ENCODE measurements at regions of chr2 and their contacts with region 1.

Region 1: DNA sequence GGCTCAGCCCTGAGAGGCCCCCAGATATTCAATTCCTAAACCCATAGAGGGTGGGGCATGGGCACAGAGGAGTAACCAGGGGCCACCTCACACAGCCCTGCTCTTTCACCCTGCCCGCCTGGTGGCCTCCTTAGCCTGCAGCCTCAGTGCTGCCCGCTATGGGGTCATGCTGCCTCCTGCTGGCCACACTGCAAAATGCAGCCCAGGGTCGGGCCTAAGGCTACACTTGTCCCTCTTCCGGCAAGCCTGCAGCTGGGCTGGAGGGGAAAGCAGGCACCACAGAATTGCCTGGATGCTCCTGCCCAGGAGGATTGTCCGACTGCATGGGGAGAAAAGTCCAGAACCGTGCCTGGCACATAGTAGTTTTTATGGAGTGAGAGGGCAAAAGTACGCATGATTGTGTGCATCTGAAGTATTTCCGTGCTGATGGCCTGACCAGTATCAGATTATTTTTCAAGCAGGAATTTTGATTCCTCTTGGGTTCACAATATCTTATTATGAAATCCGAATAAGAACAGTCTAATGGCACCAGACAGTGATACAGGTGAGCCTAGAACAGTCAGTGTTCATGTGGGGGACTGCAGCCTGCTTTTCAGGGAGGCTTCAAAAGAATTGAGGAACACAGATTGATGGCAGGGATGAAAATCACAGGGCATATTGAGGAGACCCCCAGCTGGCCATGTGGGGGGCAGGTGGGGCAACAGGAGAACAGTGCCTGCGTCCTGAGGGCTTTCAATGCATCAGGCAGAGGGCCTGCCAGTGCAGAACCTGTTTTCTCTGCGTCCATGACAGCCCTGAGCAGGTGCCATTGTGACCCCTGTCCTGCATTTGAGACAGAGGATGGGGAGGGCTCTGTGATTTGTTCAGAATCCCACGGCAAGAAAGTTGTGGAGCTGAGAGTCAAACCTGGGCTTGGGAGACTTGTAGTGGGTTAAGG is 51.2 kb upstream of the ALPP start:
- DNase-seq: peak; percentile 57 to 68 (median 66)
- ATAC-seq: peak; percentile 93
- H3K4me3 ChIP-seq: no peak overlapping the region
- H3K27ac ChIP-seq: no peak overlapping the region
- H3K4me1 ChIP-seq: peaks cover 0 to 12% of the 10 kb centered on the region in 2 experiments; a peak in 2 of 5 replicates
- H3K27me3 ChIP-seq: no peaks in the 10 kb centered on the region
- CTCF ChIP-seq: peak; percentile 72 to 90 (median 73)
- EP300 ChIP-seq: no peak
- POLR2A ChIP-seq: no peak
- RAD21 ChIP-seq: peak; percentile 42 to 72; a peak in 3 of 4 replicates

Region 2: GRCh38 chr2:231900486-231900942 is 426.9 kb before region 1 on chr2:
- CTCF ChIA-PET with region 1: interaction called, 8 read pairs
- POLR2A ChIA-PET with region 1: interaction called, 4 read pairs
- in situ Hi-C with region 1: loop called (anchors 5 kb)
- intact Hi-C with region 1: no loop called
- DNase-seq: peak; percentile 77 to 86 (median 78)
- ATAC-seq: peak; percentile 99
- H3K4me3 ChIP-seq: no peak overlapping the region
- H3K27ac ChIP-seq: no peak overlapping the region
- H3K4me1 ChIP-seq: peaks cover 0 to 14% of the 10 kb centered on the region in 2 experiments; a peak in 2 of 5 replicates
- H3K27me3 ChIP-seq: peaks cover 0 to 8% of the 10 kb centered on the region in 2 experiments; a peak in 2 of 5 replicates
- CTCF ChIP-seq: peak; percentile 79 to 97 (median 82)
- EP300 ChIP-seq: no peak
- POLR2A ChIP-seq: no peak
- RAD21 ChIP-seq: peak; percentile 53 to 74

Region 3: GRCh38 chr2:231925303-231926179 is 401.8 kb before region 1 on chr2:
- CTCF ChIA-PET with region 1: interaction called, 3 read pairs
- POLR2A ChIA-PET with region 1: no interaction called
- in situ Hi-C with region 1: no loop called
- intact Hi-C with region 1: loop called (anchors 5 kb)
- DNase-seq: peak; percentile 77 to 84 (median 82)
- ATAC-seq: peak; percentile 94
- H3K4me3 ChIP-seq: peak overlapping the region; percentile 34
- H3K27ac ChIP-seq: no peak overlapping the region
- H3K4me1 ChIP-seq: peaks cover 0 to 30% of the 10 kb centered on the region in 2 experiments; a peak in 3 of 5 replicates
- H3K27me3 ChIP-seq: peaks cover 30 to 58% of the 10 kb centered on the region in 2 experiments
- CTCF ChIP-seq: peak; percentile 67 to 85 (median 69)
- EP300 ChIP-seq: no peak
- POLR2A ChIP-seq: no peak
- RAD21 ChIP-seq: peak; percentile 68 to 77

Region 4: DNA sequence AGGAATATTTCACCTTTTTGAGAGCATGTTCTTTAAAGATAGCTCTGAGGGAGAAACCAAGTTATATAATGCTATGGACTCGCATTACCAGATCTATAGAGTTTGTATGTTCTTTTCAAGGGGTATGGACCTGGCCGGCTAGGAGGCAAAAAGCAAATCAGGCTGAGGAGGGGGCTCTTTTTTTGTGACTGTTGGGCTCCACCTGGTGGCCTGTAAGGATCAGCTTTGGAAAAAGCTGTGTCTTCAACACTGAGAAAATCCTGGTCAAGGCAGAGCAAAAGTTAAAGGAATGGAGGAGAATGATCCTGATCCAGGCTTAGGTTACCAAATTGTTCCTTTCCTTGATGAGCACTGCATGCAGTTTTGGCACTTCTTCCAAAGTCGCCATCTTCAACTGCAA is 185.3 kb before region 1 on chr2:
- CTCF ChIA-PET with region 1: no interaction called
- POLR2A ChIA-PET with region 1: no interaction called
- in situ Hi-C with region 1: no loop called
- intact Hi-C with region 1: loop called (anchors 10 kb)
- DNase-seq: peak; percentile 20 to 44 (median 30)
- ATAC-seq: peak; percentile 84
- H3K4me3 ChIP-seq: no peak overlapping the region
- H3K27ac ChIP-seq: no peak overlapping the region
- H3K4me1 ChIP-seq: no peaks in the 10 kb centered on the region; a peak in 1 of 5 replicates
- H3K27me3 ChIP-seq: no peaks in the 10 kb centered on the region
- CTCF ChIP-seq: peak; percentile 63 to 73 (median 64)
- EP300 ChIP-seq: no peak
- POLR2A ChIP-seq: no peak
- RAD21 ChIP-seq: peak; percentile 78 to 81

Region 5: GRCh38 chr2:232438951-232439757 is 111.8 kb after region 1 on chr2:
- CTCF ChIA-PET with region 1: no interaction called
- POLR2A ChIA-PET with region 1: no interaction called
- in situ Hi-C with region 1: loop called (anchors 5 kb)
- intact Hi-C with region 1: no loop called
- DNase-seq: peak in 3 of 4 experiments; percentile 14 to 34 (median 17)
- ATAC-seq: peak; percentile 86
- H3K4me3 ChIP-seq: no peak overlapping the region
- H3K27ac ChIP-seq: no peak overlapping the region
- H3K4me1 ChIP-seq: peaks cover 0 to 4% of the 10 kb centered on the region in 2 experiments; a peak in 2 of 5 replicates
- H3K27me3 ChIP-seq: peaks cover 0 to 36% of the 10 kb centered on the region in 2 experiments; a peak in 3 of 5 replicates
- CTCF ChIP-seq: peak in 2 of 3 experiments; percentile 20 to 25; a peak in 3 of 6 replicates
- EP300 ChIP-seq: no peak
- POLR2A ChIP-seq: no peak
- RAD21 ChIP-seq: peak in 1 of 2 experiments; percentile 37; a peak in 2 of 4 replicates

Region 6: DNA sequence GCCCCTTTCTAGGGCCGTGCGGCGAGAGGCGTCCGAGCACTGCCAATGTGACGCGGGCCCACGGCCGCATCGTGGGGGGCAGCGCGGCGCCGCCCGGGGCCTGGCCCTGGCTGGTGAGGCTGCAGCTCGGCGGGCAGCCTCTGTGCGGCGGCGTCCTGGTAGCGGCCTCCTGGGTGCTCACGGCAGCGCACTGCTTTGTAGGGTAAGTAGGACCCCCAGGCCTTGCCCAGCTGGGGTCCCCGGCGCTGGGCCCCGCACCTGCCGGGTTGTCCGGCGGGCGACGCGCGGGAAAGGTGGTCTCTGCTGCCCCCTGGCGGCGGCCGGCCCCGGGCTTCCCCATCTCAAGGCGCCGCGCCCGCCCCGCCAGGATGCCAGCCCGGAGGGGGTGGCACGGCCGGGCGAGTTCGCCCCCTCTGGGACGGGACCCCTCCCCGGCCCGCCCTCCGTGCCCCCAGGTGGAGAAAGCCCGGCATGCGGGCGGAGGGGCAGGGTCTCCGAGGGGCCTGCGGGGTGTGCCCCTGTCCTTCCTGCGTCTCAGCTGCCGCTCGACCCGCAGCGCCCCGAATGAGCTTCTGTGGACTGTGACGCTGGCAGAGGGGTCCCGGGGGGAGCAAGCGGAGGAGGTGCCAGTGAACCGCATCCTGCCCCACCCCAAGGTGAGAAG is 194.7 kb after region 1 on chr2:
- CTCF ChIA-PET with region 1: no interaction called
- POLR2A ChIA-PET with region 1: no interaction called
- in situ Hi-C with region 1: no loop called
- intact Hi-C with region 1: loop called (anchors 5 kb)
- DNase-seq: peak; percentile 38 to 85 (median 80)
- ATAC-seq: peak; percentile 81
- H3K4me3 ChIP-seq: no peak overlapping the region
- H3K27ac ChIP-seq: no peak overlapping the region
- H3K4me1 ChIP-seq: peaks cover 0 to 27% of the 10 kb centered on the region in 2 experiments; a peak in 2 of 5 replicates
- H3K27me3 ChIP-seq: peaks cover 0 to 50% of the 10 kb centered on the region in 2 experiments; a peak in 3 of 5 replicates
- CTCF ChIP-seq: peak; percentile 39 to 72 (median 66); a peak in 5 of 6 replicates
- EP300 ChIP-seq: no peak
- POLR2A ChIP-seq: no peak
- RAD21 ChIP-seq: peak; percentile 54 to 75

Measured in K562 (cell line).